ENCODE measurements at regions of chr10 and their contacts with region 1.

Region 1: GRCh38 chr10:95832216-95833041 is 75.3 kb upstream of the CC2D2B start:
- DNase-seq: peak; percentile 52
- ATAC-seq: peak; percentile 88
- H3K4me3 Mint-ChIP-seq: peak overlapping the region; percentile 82
- H3K27ac Mint-ChIP-seq: peak overlapping the region; percentile 95
- H3K4me1 Mint-ChIP-seq: peaks cover 91% of the 10 kb centered on the region
- H3K27me3 Mint-ChIP-seq: no peaks in the 10 kb centered on the region
- CTCF ChIP-seq: no peak

Region 2: GRCh38 chr10:95767884-95768556 is 64.4 kb before region 1 on chr10:
- CTCF ChIA-PET with region 1: no interaction called
- POLR2A ChIA-PET with region 1: interaction called, 14 read pairs
- intact Hi-C with region 1: no loop called
- DNase-seq: peak; percentile 32
- ATAC-seq: peak; percentile 89
- H3K4me3 Mint-ChIP-seq: peak overlapping the region; percentile 74
- H3K27ac Mint-ChIP-seq: peak overlapping the region; percentile 97
- H3K4me1 Mint-ChIP-seq: peaks cover 77% of the 10 kb centered on the region
- H3K27me3 Mint-ChIP-seq: no peaks in the 10 kb centered on the region
- CTCF ChIP-seq: no peak

Region 3: GRCh38 chr10:95792874-95793285 is 39.5 kb before region 1 on chr10:
- CTCF ChIA-PET with region 1: no interaction called
- POLR2A ChIA-PET with region 1: interaction called, 298 read pairs
- intact Hi-C with region 1: loop called (anchors 1 kb)
- DNase-seq: no peak
- ATAC-seq: peak; percentile 15
- H3K4me3 Mint-ChIP-seq: peak overlapping the region; percentile 32
- H3K27ac Mint-ChIP-seq: peak overlapping the region; percentile 94
- H3K4me1 Mint-ChIP-seq: peaks cover 94% of the 10 kb centered on the region
- H3K27me3 Mint-ChIP-seq: no peaks in the 10 kb centered on the region
- CTCF ChIP-seq: no peak

Region 4: GRCh38 chr10:95820363-95820762 is 12.1 kb before region 1 on chr10:
- CTCF ChIA-PET with region 1: interaction called, 39 read pairs
- POLR2A ChIA-PET with region 1: interaction called, 167 read pairs
- intact Hi-C with region 1: loop called (anchors 1 kb)
- DNase-seq: no peak
- ATAC-seq: peak; percentile 78
- H3K4me3 Mint-ChIP-seq: peak overlapping the region; percentile 72
- H3K27ac Mint-ChIP-seq: peak overlapping the region; percentile 93
- H3K4me1 Mint-ChIP-seq: peaks cover 80% of the 10 kb centered on the region
- H3K27me3 Mint-ChIP-seq: no peaks in the 10 kb centered on the region
- CTCF ChIP-seq: no peak

Region 5: GRCh38 chr10:95877881-95878280 is 45.5 kb after region 1 on chr10:
- CTCF ChIA-PET with region 1: no interaction called
- POLR2A ChIA-PET with region 1: no interaction called
- intact Hi-C with region 1: no loop called
- DNase-seq: no peak
- ATAC-seq: no peak
- H3K4me3 Mint-ChIP-seq: no peak overlapping the region
- H3K27ac Mint-ChIP-seq: no peak overlapping the region
- H3K4me1 Mint-ChIP-seq: peaks cover 16% of the 10 kb centered on the region
- H3K27me3 Mint-ChIP-seq: no peaks in the 10 kb centered on the region
- CTCF ChIP-seq: no peak